Stomach (tissue), 19 donors: ENCODE measurements at regions of chr12 and their contacts with region 1.

Region 1: DNA sequence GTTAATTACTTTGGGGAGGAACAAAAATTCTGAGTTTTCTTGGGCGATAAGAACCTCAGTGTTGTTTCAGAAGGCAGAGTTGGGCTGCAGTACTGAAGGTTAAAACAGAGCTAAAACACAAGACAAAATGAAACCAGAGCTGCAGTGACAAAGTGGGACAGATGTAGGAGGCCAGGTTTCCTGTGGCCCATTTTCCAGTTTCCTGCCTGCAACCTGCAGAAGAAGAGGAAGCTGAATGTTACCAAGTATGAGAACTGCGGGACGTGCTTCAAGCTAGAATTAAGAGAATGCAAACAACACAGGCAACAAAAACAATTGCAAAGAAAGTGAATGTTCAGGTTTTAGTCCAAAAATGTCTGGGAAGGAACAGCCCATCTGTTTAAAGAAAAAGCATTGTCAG is 17.8 kb downstream of the ELK3 start:
- DNase-seq: no peak
- H3K4me3 ChIP-seq: no peak overlapping the region
- H3K27ac ChIP-seq: peak overlapping the region in 4 of 5 donors; percentile 16 to 44 (median 30)
- H3K4me1 ChIP-seq: peaks cover 10 to 66% (median 33%) of the 10 kb centered on the region in 4 donors
- H3K27me3 ChIP-seq: no peaks in the 10 kb centered on the region
- CTCF ChIP-seq: no peak
- EP300 ChIP-seq: no peak
- POLR2A ChIP-seq: no peak

Region 2: GRCh38 chr12:95480230-95480629 is 731.8 kb before region 1 on chr12:
- intact Hi-C with region 1: no loop called
- DNase-seq: no peak
- H3K4me3 ChIP-seq: no peak overlapping the region
- H3K27ac ChIP-seq: no peak overlapping the region
- H3K4me1 ChIP-seq: peaks cover 9 to 76% (median 43%) of the 10 kb centered on the region in 4 donors
- H3K27me3 ChIP-seq: no peaks in the 10 kb centered on the region
- CTCF ChIP-seq: no peak
- EP300 ChIP-seq: no peak
- POLR2A ChIP-seq: no peak

Region 3: GRCh38 chr12:96061864-96062453 is 150.0 kb before region 1 on chr12:
- intact Hi-C with region 1: loop called (anchors 5 kb)
- DNase-seq: peak; percentile 82 to 93
- H3K4me3 ChIP-seq: no peak overlapping the region
- H3K27ac ChIP-seq: no peak overlapping the region
- H3K4me1 ChIP-seq: peaks cover 0 to 7% (median 2%) of the 10 kb centered on the region in 4 donors
- H3K27me3 ChIP-seq: no peaks in the 10 kb centered on the region
- CTCF ChIP-seq: peak in 6 of 7 experiments; percentile 66 to 96 (median 82)
- EP300 ChIP-seq: no peak
- POLR2A ChIP-seq: no peak